Activated CD4-positive, alpha-beta T cell treated with anti-CD3 and anti-CD28 coated beads for 36 hours (primary cell): ENCODE measurements at regions of chr1 and their contacts with region 1.

Region 1: DNA sequence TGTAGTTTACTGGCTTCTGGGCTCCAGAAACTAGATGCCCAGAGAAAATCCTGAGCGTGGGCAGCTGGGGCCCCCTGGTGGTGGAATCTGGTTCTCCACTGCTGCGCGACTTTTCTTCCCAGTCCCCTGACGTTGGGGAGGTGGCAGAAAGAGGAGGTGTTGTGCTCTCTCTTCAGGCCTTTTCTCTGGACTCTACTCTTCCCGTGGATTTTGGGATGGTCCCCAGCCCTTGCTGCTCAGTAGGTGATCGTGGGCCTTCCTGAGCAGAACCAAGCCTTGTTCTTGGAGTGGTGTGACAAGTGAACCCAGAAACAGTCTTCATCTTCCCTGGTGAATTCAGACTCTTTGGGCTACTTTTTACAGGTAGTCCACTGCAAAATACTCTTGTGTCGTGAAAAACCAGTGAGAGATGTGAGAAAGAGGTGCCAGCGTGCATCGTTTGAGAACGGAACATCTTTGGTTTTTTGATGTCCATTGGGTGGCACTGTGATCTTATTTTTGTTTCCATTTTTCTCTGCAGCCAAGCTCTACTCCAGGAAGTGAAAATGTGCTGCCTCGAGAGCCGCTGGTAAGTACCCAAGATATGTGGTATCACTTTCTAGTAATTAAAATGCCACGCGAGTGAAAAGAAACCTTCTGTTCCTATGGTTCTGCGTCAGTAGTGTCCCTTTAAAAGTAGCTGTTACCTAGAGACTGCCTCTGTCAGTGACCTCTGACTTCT is 20.2 kb downstream of the PEX14 start:
- DNase-seq: peak; percentile 90
- ATAC-seq: peak; percentile 87
- H3K4me3 Mint-ChIP-seq: peak overlapping the region; percentile 72
- H3K27ac Mint-ChIP-seq: peak overlapping the region; percentile 91
- H3K4me1 Mint-ChIP-seq: peaks cover 49% of the 10 kb centered on the region
- H3K27me3 Mint-ChIP-seq: no peaks in the 10 kb centered on the region

Region 2: DNA sequence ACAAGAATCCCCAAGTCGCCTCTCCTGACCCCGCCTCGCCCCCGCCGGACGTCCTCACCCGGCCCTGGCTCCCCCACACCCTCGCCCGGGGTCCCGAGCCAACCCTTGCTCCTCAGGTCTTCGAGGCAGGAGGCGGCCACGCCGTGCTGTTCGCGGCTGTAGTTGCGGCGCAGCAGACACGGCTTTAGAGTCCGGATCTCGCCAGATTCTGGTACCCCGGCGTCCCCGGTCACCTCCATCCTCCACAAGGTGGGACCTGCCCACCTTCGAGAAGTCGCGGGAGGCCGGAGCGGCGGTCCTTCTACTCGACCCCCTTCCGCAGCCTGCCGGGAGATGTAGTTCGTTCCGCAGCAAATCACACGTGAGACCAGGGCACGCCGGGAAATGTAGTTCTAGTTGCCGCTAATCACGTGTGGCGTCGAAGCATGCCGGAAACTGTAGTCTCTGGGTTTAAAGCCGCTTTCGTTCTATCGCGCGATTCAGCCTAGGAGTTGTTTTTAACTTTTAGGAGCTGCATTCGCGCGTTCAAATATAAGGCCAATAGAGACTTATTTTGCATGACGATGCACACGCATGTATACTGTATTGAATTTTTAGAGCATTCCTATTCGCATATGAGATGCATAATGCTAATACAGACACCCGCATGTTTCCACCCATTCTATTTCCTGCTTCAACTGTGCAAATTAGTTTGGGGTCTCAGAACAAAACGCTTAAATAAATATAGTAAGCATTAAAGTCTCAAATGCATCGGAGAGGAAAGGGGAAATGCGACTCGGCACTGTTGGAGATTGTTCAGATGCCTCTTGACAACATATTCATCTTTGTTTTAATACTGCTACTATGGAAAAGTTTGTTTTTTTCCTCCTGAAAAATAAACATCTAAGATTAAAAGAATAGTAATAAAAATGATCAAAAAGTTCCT is 22.4 kb before region 1 on chr1 and contains the start of gene DFFA:
- CTCF ChIA-PET with region 1: interaction called, 17 read pairs
- POLR2A ChIA-PET with region 1: no interaction called
- intact Hi-C with region 1: loop called (anchors 1 to 2 kb)
- DNase-seq: peak; percentile 96
- ATAC-seq: peak; percentile 83
- H3K4me3 Mint-ChIP-seq: peak within 1 kb of the TSS; percentile 97
- H3K27ac Mint-ChIP-seq: peak within 1 kb of the TSS; percentile 92
- H3K4me1 Mint-ChIP-seq: peaks cover 38% of the 10 kb centered on the region
- H3K27me3 Mint-ChIP-seq: no peaks in the 10 kb centered on the region
- total RNA-seq, gene DFFA: 45.7 to 46.4 TPM

Region 3: GRCh38 chr1:10484521-10484920 is 10.4 kb before region 1 on chr1:
- CTCF ChIA-PET with region 1: interaction called, 26 read pairs
- POLR2A ChIA-PET with region 1: interaction called, 3 read pairs
- intact Hi-C with region 1: no loop called
- DNase-seq: no peak
- ATAC-seq: no peak
- H3K4me3 Mint-ChIP-seq: no peak overlapping the region
- H3K27ac Mint-ChIP-seq: no peak overlapping the region
- H3K4me1 Mint-ChIP-seq: peaks cover 6% of the 10 kb centered on the region
- H3K27me3 Mint-ChIP-seq: no peaks in the 10 kb centered on the region

Region 4: DNA sequence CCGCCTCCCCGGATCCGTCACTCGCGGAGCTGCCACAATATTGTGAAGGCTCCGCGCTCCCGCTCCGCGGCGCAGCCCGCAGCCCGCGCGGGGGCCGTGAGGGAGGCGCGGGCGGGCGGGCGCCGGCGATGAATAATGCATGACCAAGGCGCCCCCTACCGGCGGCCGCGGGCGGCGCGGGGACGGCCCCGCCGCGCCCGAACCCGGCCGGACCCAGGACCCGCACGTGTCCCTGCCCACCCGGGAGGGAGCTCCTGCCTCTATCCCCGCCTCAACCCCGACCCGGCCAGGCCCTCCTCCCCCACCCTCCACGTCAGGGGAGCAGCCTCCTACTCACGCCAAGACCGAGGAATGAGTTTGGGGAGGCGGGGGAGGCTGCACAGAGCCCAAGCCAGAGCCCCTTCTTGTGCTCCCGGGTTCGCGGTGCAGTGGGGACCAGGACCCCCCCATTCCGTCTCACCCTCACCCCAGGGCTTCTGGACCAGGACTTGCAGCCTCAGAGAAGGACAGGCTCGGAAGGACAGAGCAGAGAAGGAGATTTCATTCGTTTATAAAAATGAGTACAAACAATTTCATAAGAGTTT is 372.3 kb after region 1 on chr1:
- CTCF ChIA-PET with region 1: interaction called, 6 read pairs
- POLR2A ChIA-PET with region 1: interaction called, 3 read pairs
- intact Hi-C with region 1: loop called in 1 of 2 experiments (anchors 1 kb)
- DNase-seq: peak; percentile 77
- ATAC-seq: peak; percentile 84
- H3K4me3 Mint-ChIP-seq: peak overlapping the region; percentile 43
- H3K27ac Mint-ChIP-seq: no peak overlapping the region
- H3K4me1 Mint-ChIP-seq: peaks cover 12% of the 10 kb centered on the region
- H3K27me3 Mint-ChIP-seq: peaks cover 51% of the 10 kb centered on the region

Region 5: DNA sequence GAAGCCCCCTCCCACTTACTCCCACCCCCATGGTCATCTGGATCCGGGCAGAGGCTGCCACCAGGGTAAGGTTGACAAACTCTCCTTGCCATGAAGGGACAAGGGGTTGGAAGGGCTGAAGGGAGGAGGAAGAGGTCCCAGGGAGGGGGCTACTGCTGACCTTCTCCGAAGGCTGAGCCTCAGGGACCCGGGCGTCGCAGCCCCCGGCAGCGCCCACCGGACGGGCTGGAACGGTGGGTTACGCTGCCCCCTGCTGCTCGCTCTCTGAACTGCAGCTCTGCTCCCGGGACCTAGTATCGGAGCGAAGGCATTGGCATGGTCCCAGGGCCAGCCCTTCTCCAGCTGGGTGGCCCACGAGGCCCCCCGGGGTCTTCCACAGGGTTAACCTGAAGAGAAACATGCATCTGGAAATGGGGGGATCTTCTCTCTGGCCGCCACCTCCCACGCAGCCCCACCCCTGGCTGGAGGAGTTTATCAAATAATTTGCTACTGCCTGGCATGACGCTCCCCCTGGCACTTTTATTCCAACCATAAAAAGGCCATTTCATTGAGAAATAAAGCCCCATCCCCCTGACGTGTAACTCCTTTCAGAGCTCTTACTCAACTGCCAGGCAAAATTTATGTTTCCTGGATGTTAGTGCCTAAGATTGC is 447.1 kb after region 1 on chr1:
- CTCF ChIA-PET with region 1: interaction called, 4 read pairs
- POLR2A ChIA-PET with region 1: no interaction called
- intact Hi-C with region 1: loop called in 1 of 2 experiments (anchors 1 kb)
- DNase-seq: peak; percentile 77
- ATAC-seq: no peak
- H3K4me3 Mint-ChIP-seq: no peak overlapping the region
- H3K27ac Mint-ChIP-seq: no peak overlapping the region
- H3K4me1 Mint-ChIP-seq: peaks cover 34% of the 10 kb centered on the region
- H3K27me3 Mint-ChIP-seq: peaks cover 53% of the 10 kb centered on the region